B cell (primary cell): ENCODE measurements at regions of chr10 and their contacts with region 1.

Region 1: GRCh38 chr10:17643755-17644484 is at the start of gene STAM:
- DNase-seq: peak; percentile 96
- ATAC-seq: peak; percentile 90
- H3K4me3 ChIP-seq: peak within 1 kb of the TSS; percentile 71 to 99 (median 86)
- H3K4me3 Mint-ChIP-seq: peak within 1 kb of the TSS; percentile 98
- H3K27ac ChIP-seq: peak within 1 kb of the TSS; percentile 96 to 99
- H3K27ac Mint-ChIP-seq: peak within 1 kb of the TSS; percentile 100
- H3K4me1 ChIP-seq: peaks cover 35 to 43% of the 10 kb centered on the region in 2 donors
- H3K4me1 Mint-ChIP-seq: peaks cover 51% of the 10 kb centered on the region
- H3K27me3 ChIP-seq: no peaks in the 10 kb centered on the region
- H3K27me3 Mint-ChIP-seq: no peaks in the 10 kb centered on the region
- CTCF ChIP-seq: no peak
- total RNA-seq, gene STAM: 31.6 and 35.1 TPM in 2 replicates

Region 2: GRCh38 chr10:16817125-16818019 is 826.5 kb before region 1 on chr10 and contains the start of gene RSU1:
- CTCF ChIA-PET with region 1: interaction called, 3 read pairs
- POLR2A ChIA-PET with region 1: no interaction called
- intact Hi-C with region 1: loop called (anchors 5 kb)
- DNase-seq: peak; percentile 100
- ATAC-seq: peak; percentile 98
- H3K4me3 ChIP-seq: peak within 1 kb of the TSS; percentile 68 to 92 (median 92)
- H3K4me3 Mint-ChIP-seq: peak within 1 kb of the TSS; percentile 92
- H3K27ac ChIP-seq: peak within 1 kb of the TSS; percentile 78
- H3K27ac Mint-ChIP-seq: peak within 1 kb of the TSS; percentile 98
- H3K4me1 ChIP-seq: peaks cover 13 to 15% of the 10 kb centered on the region in 2 donors
- H3K4me1 Mint-ChIP-seq: peaks cover 30% of the 10 kb centered on the region
- H3K27me3 ChIP-seq: peaks cover 0 to 2% (median 0%) of the 10 kb centered on the region in 4 experiments
- H3K27me3 Mint-ChIP-seq: peaks cover 5% of the 10 kb centered on the region
- CTCF ChIP-seq: no peak
- total RNA-seq, gene RSU1: 37.2 and 41.1 TPM in 2 replicates

Region 3: DNA sequence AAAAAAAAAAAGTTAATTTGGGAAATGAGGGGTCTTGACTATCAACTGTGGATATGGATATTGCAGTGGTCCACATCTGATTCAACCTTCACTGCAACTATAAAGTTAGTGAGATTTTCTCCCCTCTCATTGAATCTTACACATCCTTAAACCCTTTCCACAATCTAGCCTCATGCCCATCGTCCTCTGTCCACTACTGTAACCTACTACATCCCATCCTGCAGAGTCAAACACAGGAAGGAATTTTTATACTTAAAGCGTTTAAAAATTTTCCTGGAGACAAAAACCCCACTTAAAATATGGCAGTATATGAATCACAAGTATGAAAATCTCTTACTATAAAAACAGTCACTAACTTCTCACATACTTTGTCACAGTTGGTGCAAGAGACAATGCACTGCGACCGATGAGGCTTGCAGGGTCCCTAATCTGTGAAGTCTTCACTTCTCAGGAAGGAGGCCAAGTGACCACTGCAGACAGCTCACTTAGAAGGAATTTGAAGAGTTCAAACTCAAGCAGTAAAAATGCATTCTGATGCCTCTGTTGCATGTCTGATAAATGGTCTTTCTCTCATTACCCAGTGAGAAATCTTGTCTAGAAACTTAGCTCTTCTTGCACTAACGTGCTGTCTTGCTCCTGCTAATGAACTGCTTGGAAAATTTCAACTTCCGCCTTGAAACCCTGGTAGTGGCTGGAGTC is 139.2 kb before region 1 on chr10:
- CTCF ChIA-PET with region 1: no interaction called
- POLR2A ChIA-PET with region 1: no interaction called
- intact Hi-C with region 1: no loop called
- DNase-seq: no peak
- ATAC-seq: no peak
- H3K4me3 ChIP-seq: no peak overlapping the region
- H3K4me3 Mint-ChIP-seq: no peak overlapping the region
- H3K27ac ChIP-seq: no peak overlapping the region
- H3K27ac Mint-ChIP-seq: no peak overlapping the region
- H3K4me1 ChIP-seq: no peaks in the 10 kb centered on the region
- H3K4me1 Mint-ChIP-seq: no peaks in the 10 kb centered on the region
- H3K27me3 ChIP-seq: no peaks in the 10 kb centered on the region
- H3K27me3 Mint-ChIP-seq: peaks cover 5% of the 10 kb centered on the region
- CTCF ChIP-seq: no peak

Region 4: GRCh38 chr10:17669185-17669872 is 25.4 kb after region 1 on chr10:
- CTCF ChIA-PET with region 1: interaction called, 4 read pairs
- POLR2A ChIA-PET with region 1: interaction called, 5 read pairs
- intact Hi-C with region 1: loop called (anchors 2 kb)
- DNase-seq: peak; percentile 57
- ATAC-seq: peak; percentile 79
- H3K4me3 ChIP-seq: peak overlapping the region in 3 of 5 experiments; percentile 10 to 49 (median 18)
- H3K4me3 Mint-ChIP-seq: peak overlapping the region; percentile 82
- H3K27ac ChIP-seq: peak overlapping the region; percentile 15 to 68
- H3K27ac Mint-ChIP-seq: peak overlapping the region; percentile 73
- H3K4me1 ChIP-seq: peaks cover 10 to 11% of the 10 kb centered on the region in 2 donors
- H3K4me1 Mint-ChIP-seq: peaks cover 35% of the 10 kb centered on the region
- H3K27me3 ChIP-seq: no peaks in the 10 kb centered on the region
- H3K27me3 Mint-ChIP-seq: no peaks in the 10 kb centered on the region
- CTCF ChIP-seq: no peak

Region 5: GRCh38 chr10:17698696-17699095 is 54.8 kb after region 1 on chr10:
- CTCF ChIA-PET with region 1: no interaction called
- POLR2A ChIA-PET with region 1: no interaction called
- intact Hi-C with region 1: loop called (anchors 2 kb)
- DNase-seq: no peak
- ATAC-seq: no peak
- H3K4me3 ChIP-seq: no peak overlapping the region
- H3K4me3 Mint-ChIP-seq: no peak overlapping the region
- H3K27ac ChIP-seq: no peak overlapping the region
- H3K27ac Mint-ChIP-seq: no peak overlapping the region
- H3K4me1 ChIP-seq: no peaks in the 10 kb centered on the region
- H3K4me1 Mint-ChIP-seq: peaks cover 3% of the 10 kb centered on the region
- H3K27me3 ChIP-seq: no peaks in the 10 kb centered on the region
- H3K27me3 Mint-ChIP-seq: no peaks in the 10 kb centered on the region
- CTCF ChIP-seq: no peak